Activated CD4-positive, alpha-beta memory T cell treated with anti-CD3 and anti-CD28 coated beads for 36 hours (primary cell): ENCODE measurements at regions of chr19 and their contacts with region 1.

Region 1: DNA sequence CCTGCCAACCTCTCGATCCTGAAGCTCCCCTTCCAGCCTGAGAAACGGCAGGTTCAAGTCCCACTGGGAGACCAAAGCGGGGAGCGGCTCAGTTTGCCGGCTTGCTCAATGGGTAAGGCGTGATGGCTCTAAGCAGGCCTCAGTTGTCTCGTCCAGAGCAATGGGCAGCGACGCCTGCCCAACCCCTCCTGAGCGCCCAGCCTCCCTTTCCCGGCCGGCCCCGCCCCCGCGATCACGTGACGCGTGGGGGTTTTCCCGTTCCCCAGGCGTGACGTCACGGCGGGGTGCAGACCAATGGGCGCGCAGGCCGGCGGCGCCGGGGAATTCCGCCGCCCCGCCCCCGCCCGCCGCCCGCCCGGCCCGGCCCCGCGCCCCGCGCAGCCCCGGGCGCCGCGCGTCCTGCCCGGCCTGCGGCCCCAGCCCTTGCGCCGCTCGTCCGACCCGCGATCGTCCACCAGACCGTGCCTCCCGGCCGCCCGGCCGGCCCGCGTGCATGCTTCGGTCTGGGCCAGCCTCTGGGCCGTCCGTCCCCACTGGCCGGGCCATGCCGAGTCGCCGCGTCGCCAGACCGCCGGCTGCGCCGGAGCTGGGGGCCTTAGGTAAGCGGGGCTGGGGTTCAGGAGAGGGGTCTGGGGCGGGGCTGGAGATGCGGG is at the start of gene RELB:
- DNase-seq: peak; percentile 97
- H3K4me3 Mint-ChIP-seq: peak within 1 kb of the TSS; percentile 96
- H3K27ac Mint-ChIP-seq: peak within 1 kb of the TSS; percentile 99
- H3K4me1 Mint-ChIP-seq: peaks cover 22% of the 10 kb centered on the region
- H3K27me3 Mint-ChIP-seq: no peaks in the 10 kb centered on the region
- total RNA-seq, gene RELB: 62.4 to 63.1 TPM

Region 2: GRCh38 chr19:44746946-44747738 is 254.1 kb before region 1 on chr19:
- CTCF ChIA-PET with region 1: no interaction called
- POLR2A ChIA-PET with region 1: no interaction called
- intact Hi-C with region 1: loop called (anchors 5 kb)
- DNase-seq: peak; percentile 96
- H3K4me3 Mint-ChIP-seq: peak overlapping the region; percentile 84
- H3K27ac Mint-ChIP-seq: peak overlapping the region; percentile 97
- H3K4me1 Mint-ChIP-seq: peaks cover 46% of the 10 kb centered on the region
- H3K27me3 Mint-ChIP-seq: no peaks in the 10 kb centered on the region

Region 3: DNA sequence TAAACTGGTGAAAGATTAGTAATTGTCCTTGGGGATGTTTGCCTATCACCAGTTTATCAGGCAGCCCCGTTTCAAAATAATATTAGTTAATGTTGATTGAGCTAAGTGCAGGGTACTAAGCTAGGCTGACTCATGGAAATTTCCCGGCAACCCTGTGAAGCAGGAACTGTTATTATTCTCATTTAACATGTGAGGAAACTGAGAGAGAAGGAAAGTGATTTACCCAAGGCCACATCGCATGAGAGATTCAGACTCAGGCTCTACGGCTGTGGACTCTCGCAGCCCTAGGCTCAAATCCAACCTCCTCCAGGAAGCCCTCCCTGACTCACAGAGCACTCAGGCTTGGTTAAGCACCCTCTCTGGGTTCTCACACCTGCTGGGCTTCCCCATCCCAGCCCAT is 26.4 kb before region 1 on chr19:
- CTCF ChIA-PET with region 1: no interaction called
- POLR2A ChIA-PET with region 1: no interaction called
- intact Hi-C with region 1: no loop called
- DNase-seq: no peak
- H3K4me3 Mint-ChIP-seq: no peak overlapping the region
- H3K27ac Mint-ChIP-seq: no peak overlapping the region
- H3K4me1 Mint-ChIP-seq: no peaks in the 10 kb centered on the region
- H3K27me3 Mint-ChIP-seq: no peaks in the 10 kb centered on the region

Region 4: GRCh38 chr19:45016388-45017319 is 15.4 kb after region 1 on chr19:
- CTCF ChIA-PET with region 1: no interaction called
- POLR2A ChIA-PET with region 1: interaction called, 10 read pairs
- intact Hi-C with region 1: loop called (anchors 1 kb)
- DNase-seq: peak; percentile 91
- H3K4me3 Mint-ChIP-seq: peak overlapping the region; percentile 34
- H3K27ac Mint-ChIP-seq: peak overlapping the region; percentile 90
- H3K4me1 Mint-ChIP-seq: peaks cover 17% of the 10 kb centered on the region
- H3K27me3 Mint-ChIP-seq: no peaks in the 10 kb centered on the region

Region 5: DNA sequence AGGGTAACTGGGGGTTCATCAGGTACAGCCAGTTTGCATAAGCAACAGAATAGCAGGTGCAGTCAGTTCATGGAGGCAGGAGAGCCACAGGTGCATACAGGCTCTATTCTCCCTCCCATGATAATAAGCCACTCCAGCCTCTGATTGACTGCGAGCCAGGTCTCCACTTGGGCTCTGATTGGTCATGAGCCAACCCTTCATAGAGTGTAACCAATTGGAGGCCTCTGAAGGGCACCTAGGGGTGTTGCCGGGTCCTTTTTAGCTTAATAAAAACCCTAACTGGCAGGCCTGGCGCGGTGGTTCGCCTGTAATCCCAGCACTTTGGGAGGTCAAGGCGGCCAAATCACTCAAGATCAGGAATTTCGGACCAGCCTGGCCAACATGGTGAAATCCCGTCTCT is 330.2 kb after region 1 on chr19:
- CTCF ChIA-PET with region 1: no interaction called
- POLR2A ChIA-PET with region 1: no interaction called
- intact Hi-C with region 1: no loop called
- DNase-seq: no peak
- H3K4me3 Mint-ChIP-seq: no peak overlapping the region
- H3K27ac Mint-ChIP-seq: no peak overlapping the region
- H3K4me1 Mint-ChIP-seq: no peaks in the 10 kb centered on the region
- H3K27me3 Mint-ChIP-seq: peaks cover 4% of the 10 kb centered on the region